Panc1 (cell line): ENCODE measurements at regions of chr1 and their contacts with region 1.

Region 1: DNA sequence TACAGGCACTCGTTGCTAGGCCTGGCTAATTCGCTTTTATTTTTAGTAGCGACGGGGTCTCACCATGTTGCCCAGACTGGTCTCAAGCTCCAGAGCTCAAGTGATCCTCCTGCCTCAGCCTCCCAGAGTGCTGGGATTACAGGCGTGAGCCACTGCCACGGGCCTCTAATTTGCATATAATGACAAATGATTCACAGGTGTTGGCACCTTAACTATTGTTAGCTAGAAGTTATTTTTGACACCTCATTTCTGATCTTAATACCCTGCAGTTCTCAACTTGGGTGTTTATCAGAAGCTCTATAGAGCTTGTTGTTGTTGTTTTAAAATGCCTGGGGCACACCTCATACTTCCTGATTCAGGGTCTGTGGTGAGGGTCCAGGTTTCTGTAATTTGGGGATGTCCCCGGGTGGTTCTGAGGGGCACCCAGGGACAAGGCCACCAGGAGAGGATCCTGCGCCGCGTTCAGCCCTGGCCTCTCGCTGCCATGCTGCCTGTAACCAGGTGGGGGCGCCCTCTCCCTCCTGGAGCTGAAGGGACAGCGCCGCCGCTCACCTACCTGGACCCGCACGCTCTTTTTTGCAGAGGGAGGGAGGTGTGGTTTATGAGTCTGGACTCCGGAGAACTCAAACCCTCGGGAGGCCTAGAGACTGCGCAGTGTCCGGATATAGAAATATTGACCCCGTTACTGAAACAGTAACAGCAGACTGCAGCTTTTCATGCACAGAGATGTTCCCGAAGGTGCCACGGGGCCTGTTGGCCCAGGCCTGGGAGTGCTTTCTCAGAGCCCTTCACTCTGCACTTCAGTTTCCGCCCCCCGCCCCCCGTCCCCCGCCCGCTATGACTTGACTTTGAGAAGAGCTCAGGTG is 23.0 kb upstream of the NEK2 start:
- DNase-seq: peak; percentile 12
- ATAC-seq: peak; percentile 97
- H3K4me3 ChIP-seq: peak overlapping the region in 1 of 2 experiments; percentile 37; a peak in 2 of 4 replicates
- H3K27ac ChIP-seq: peak overlapping the region; percentile 73
- H3K4me1 ChIP-seq: peaks cover 13% of the 10 kb centered on the region
- H3K27me3 ChIP-seq: no peaks in the 10 kb centered on the region
- CTCF ChIP-seq: peak; percentile 99

Region 2: GRCh38 chr1:211735208-211736170 is 37.1 kb after region 1 on chr1:
- CTCF ChIA-PET with region 1: interaction called, 6 read pairs
- POLR2A ChIA-PET with region 1: no interaction called
- in situ Hi-C with region 1: no loop called
- intact Hi-C with region 1: loop called (anchors 2 kb)
- DNase-seq: peak; percentile 83
- ATAC-seq: peak; percentile 91
- H3K4me3 ChIP-seq: peak overlapping the region; percentile 11 to 37; a peak in 3 of 4 replicates
- H3K27ac ChIP-seq: peak overlapping the region; percentile 99
- H3K4me1 ChIP-seq: peaks cover 71% of the 10 kb centered on the region
- H3K27me3 ChIP-seq: no peaks in the 10 kb centered on the region
- CTCF ChIP-seq: no peak

Region 3: DNA sequence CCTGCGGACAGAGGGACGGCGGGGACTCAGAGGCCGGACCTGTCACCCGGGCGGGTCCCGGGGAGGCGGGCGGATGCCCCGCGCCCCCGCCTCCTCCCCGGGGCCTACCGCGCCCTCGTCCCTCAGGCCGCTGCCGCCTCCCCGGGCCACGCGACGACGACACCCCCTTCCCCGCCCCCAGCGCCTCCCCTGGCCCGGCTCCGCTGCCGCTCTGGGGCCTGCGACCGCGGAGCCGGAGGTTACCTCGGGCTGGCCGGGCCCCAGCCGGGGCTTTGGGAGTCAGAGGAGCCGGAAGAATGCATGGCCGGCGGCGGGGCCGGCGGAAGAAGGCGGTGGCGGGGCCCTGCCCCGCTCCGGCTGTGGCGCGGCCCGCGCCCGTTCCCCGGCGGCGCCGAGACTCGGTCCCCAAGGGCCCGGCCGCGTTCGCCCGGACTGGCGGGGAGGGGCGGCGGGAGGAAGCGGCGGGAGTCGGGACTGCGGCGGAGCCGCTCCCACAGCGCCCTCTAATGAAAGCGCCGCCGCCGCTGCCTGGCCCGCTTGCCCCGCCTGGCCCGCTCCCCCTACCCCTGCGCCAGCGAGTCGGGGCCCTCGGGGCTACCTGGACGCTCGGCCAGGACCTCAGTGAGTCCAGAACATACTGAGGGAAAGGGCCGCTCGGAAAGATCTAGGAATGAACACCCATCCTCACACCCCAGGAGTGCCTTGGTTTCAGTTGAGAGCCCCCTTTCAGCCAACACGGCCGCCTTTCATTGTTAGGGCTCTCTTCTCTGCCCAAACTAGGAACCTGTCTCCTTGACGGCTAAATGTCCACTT is 132.1 kb after region 1 on chr1 and contains the start of gene LPGAT1:
- CTCF ChIA-PET with region 1: interaction called, 5 read pairs
- POLR2A ChIA-PET with region 1: no interaction called
- in situ Hi-C with region 1: no loop called
- intact Hi-C with region 1: loop called (anchors 5 kb)
- DNase-seq: no peak
- ATAC-seq: peak; percentile 96
- H3K4me3 ChIP-seq: peak within 1 kb of the TSS; percentile 63 to 87
- H3K27ac ChIP-seq: peak within 1 kb of the TSS; percentile 92
- H3K4me1 ChIP-seq: peaks cover 30% of the 10 kb centered on the region
- H3K27me3 ChIP-seq: no peaks in the 10 kb centered on the region
- CTCF ChIP-seq: peak; percentile 91
- total RNA-seq, gene LPGAT1: 85.4 TPM